Motor neuron (in vitro differentiated cells): ENCODE measurements at regions of chr1 and their contacts with region 1.

Region 1: DNA sequence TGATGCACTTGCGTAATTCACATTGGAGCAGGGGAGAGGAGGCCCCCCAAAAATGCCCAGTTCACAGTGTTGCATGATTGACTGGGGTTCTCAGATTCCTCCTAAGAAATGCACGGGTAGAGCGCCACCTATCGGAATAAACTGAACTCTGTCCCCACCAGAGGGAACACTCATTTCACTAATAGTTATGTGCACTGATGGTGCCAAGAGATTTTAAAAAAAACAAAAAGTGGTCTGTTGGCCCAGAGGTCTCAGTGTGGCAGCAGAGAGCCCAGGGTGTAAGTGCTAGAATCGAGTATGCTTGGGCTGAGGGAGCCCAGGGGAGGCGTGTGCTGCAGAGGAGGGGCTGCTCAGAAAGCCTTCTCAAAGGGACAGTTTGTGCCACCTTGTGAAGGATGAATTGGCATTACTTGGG is 6.9 kb downstream of the PINK1 start:
- ATAC-seq: peak; percentile 39 to 90 (median 58)
- H3K4me3 ChIP-seq: no peak overlapping the region
- H3K27ac ChIP-seq: no peak overlapping the region
- H3K4me1 ChIP-seq: no peaks in the 10 kb centered on the region

Region 2: GRCh38 chr1:20521960-20522861 is 118.0 kb before region 1 on chr1:
- in situ Hi-C with region 1: loop called in 6 of 9 experiments (anchors 5 to 25 kb)
- ATAC-seq: peak; percentile 45 to 80 (median 70)
- H3K4me3 ChIP-seq: no peak overlapping the region
- H3K27ac ChIP-seq: no peak overlapping the region
- H3K4me1 ChIP-seq: no peaks in the 10 kb centered on the region

Region 3: GRCh38 chr1:20717452-20718342 is 77.5 kb after region 1 on chr1 and contains the start of gene KIF17:
- in situ Hi-C with region 1: no loop called
- ATAC-seq: peak; percentile 87 to 96 (median 92)
- H3K4me3 ChIP-seq: peak within 1 kb of the TSS; percentile 43 to 59 (median 47)
- H3K27ac ChIP-seq: peak within 1 kb of the TSS in 1 of 2 donors; percentile 10
- H3K4me1 ChIP-seq: peaks cover 3 to 11% of the 10 kb centered on the region in 2 donors
- total RNA-seq, gene KIF17: 0.18 to 12.1 (median 6.8) TPM